ENCODE measurements at regions of chr1 and their contacts with region 1.

Region 1: GRCh38 chr1:202987922-202988583 is 19.1 kb upstream of the TMEM183A start:
- DNase-seq: no peak
- H3K4me3 Mint-ChIP-seq: no peak overlapping the region
- H3K27ac Mint-ChIP-seq: no peak overlapping the region
- H3K4me1 Mint-ChIP-seq: no peaks in the 10 kb centered on the region
- H3K27me3 Mint-ChIP-seq: peaks cover 23% of the 10 kb centered on the region

Region 2: GRCh38 chr1:202938287-202938925 is 49.6 kb before region 1 on chr1:
- CTCF ChIA-PET with region 1: no interaction called
- POLR2A ChIA-PET with region 1: no interaction called
- DNase-seq: no peak
- H3K4me3 Mint-ChIP-seq: no peak overlapping the region
- H3K27ac Mint-ChIP-seq: no peak overlapping the region
- H3K4me1 Mint-ChIP-seq: no peaks in the 10 kb centered on the region
- H3K27me3 Mint-ChIP-seq: peaks cover 14% of the 10 kb centered on the region

Region 3: GRCh38 chr1:202998836-202999750 is 11.0 kb after region 1 on chr1:
- CTCF ChIA-PET with region 1: interaction called, 11 read pairs
- POLR2A ChIA-PET with region 1: no interaction called
- DNase-seq: peak; percentile 66
- H3K4me3 Mint-ChIP-seq: no peak overlapping the region
- H3K27ac Mint-ChIP-seq: no peak overlapping the region
- H3K4me1 Mint-ChIP-seq: peaks cover 18% of the 10 kb centered on the region
- H3K27me3 Mint-ChIP-seq: peaks cover 37% of the 10 kb centered on the region